ENCODE measurements at regions of chr5 and their contacts with region 1.

Region 1: DNA sequence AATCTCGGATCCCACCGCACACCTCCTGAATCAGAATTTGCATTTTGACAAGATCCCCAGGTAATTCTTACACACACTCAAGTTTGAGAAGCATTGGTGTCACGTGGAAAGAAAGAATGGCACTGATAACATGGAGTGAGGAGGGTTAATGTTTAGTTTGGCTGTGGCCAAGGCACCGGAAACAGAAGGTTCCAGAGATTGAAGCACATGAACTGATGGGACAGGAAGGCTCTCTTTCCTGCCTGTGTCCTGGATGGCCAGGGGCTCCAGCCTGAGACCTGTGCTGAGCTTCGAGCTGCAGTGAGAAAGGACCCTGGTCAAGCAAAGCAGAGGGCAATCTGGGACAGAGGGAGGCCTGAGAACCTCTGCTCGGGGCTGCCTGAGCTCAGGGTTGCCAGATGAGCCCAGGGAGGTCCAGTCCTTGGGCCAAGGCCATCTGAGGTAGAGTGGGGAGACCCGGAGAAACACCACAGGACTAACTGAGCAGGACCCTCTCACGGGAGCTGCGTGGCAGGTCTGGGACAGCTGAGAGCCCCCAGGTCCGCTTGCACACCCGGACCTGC is 27.3 kb downstream of the AFAP1L1 start:
- DNase-seq: no peak
- H3K4me3 Mint-ChIP-seq: no peak overlapping the region
- H3K27ac Mint-ChIP-seq: no peak overlapping the region
- H3K4me1 Mint-ChIP-seq: peaks cover 55% of the 10 kb centered on the region
- H3K27me3 Mint-ChIP-seq: no peaks in the 10 kb centered on the region

Region 2: DNA sequence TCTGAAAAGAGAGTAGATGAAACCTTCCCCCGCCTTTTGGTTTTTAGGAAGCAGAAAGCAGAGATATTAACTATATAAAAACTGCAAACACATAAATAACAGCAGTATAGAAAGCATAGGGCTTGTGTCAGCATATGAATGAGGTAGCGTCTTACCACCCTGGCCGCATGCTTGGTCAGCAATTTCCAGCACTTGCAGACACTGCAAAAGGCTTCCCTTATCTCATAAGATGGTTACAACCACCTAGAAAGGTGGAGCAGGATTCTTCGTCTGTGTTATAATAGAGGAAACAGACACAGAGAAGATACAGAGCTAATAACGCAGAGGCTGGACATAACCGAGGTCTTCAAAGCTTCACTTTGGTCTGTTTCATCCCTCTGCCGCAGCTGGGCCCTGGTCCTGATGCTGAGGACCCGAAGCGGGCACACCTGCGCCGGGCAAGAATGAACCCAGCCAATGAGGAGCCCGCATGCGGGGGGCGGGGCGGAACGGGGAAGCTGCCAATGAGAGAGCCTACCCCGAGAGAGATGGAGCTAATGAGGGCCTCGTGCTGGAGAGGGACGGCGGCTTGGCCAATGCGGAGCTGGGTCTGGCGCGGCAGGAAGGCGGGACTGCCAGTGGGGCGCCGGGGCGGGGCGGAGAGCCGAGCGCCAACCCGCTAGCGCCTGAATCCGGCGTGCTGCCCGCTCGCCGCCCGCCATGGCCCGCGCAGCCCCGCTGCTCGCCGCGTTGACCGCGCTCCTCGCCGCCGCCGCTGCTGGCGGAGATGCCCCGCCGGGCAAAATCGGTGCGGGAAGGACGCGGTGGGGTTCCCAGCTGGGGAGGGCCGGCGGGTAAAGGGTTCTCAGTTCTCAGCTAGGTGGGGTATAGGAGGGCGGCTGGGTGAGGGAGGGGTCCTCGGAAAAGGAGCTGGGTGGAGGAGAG is 58.7 kb after region 1 on chr5 and contains the start of gene PCYOX1L:
- CTCF ChIA-PET with region 1: no interaction called
- intact Hi-C with region 1: loop called (anchors 2 kb)
- DNase-seq: peak; percentile 95
- H3K4me3 Mint-ChIP-seq: peak within 1 kb of the TSS; percentile 95
- H3K27ac Mint-ChIP-seq: peak within 1 kb of the TSS; percentile 90
- H3K4me1 Mint-ChIP-seq: peaks cover 61% of the 10 kb centered on the region
- H3K27me3 Mint-ChIP-seq: no peaks in the 10 kb centered on the region
- total RNA-seq, gene PCYOX1L: 19.9 to 21.0 TPM

Region 3: GRCh38 chr5:149618581-149619251 is 319.8 kb after region 1 on chr5:
- CTCF ChIA-PET with region 1: no interaction called
- intact Hi-C with region 1: no loop called
- DNase-seq: peak; percentile 66
- H3K4me3 Mint-ChIP-seq: no peak overlapping the region
- H3K27ac Mint-ChIP-seq: no peak overlapping the region
- H3K4me1 Mint-ChIP-seq: peaks cover 10% of the 10 kb centered on the region
- H3K27me3 Mint-ChIP-seq: no peaks in the 10 kb centered on the region